ENCODE measurements at regions of chr14 and their contacts with region 1.

Region 1: DNA sequence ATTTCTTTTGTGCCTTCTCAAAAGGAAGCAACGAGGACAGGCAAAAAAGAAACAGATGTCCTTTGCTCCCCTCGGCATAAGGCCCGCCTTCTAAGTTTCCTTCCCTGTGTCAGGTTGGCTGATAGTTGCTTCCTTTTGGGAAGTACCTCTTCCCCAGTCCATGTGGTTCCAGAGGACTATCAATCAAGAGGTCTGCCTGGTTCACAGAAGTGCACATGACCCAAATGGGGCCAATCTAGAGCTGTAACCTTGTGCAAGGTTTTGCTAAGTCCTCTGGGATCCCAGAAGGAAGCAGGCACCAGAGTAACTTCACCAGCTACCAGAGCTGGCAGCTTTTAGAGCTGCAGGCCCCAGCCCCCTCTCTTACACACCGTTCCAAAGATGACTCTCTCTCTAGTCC is 42.6 kb downstream of the TMEM63C start:
- DNase-seq: no peak
- CTCF ChIP-seq: no peak

Region 2: GRCh38 chr14:77124345-77125280 is 99.6 kb before region 1 on chr14:
- CTCF ChIA-PET with region 1: no interaction called
- POLR2A ChIA-PET with region 1: no interaction called
- DNase-seq: peak; percentile 79
- CTCF ChIP-seq: peak; percentile 89

Region 3: DNA sequence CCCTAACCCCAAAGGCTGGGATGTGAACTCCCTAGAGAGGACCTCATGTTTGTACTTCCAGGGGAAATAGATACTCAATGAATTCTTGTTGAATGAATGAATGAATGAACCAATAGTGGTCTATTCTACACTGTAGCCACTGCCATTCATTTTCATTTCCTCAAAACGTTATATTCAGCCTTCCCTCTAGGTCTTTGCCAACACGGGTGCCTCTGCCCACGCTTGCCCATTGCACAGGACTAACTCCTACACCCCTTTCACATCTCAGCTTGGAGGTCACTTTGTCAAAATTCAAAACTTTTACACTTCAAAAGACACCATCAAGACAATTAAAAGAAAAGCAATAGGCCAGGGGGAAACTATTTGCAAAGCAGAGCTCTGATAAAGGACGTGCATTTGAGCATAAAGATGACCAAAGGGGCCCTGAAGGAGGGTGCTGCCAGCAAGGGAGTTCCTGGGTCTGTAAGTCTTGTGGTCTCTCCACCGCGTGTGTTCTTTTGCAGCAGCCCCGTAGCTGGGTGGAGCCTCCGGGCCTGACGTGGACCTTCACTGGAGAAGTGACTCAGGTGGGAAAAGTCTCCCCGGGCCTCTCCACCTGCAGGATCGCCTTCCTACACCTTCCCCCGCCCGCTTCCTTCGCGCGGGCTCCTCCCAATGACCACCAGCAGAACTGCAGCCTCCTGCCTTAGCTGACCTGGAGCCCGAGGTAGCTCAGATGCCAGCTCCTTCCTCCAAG is 11.1 kb before region 1 on chr14:
- CTCF ChIA-PET with region 1: interaction called, 17 read pairs
- POLR2A ChIA-PET with region 1: no interaction called
- DNase-seq: peak; percentile 75
- CTCF ChIP-seq: peak; percentile 87

Region 4: GRCh38 chr14:77241942-77242341 is 17.7 kb after region 1 on chr14:
- CTCF ChIA-PET with region 1: no interaction called
- POLR2A ChIA-PET with region 1: no interaction called
- DNase-seq: no peak
- CTCF ChIP-seq: no peak

Region 5: DNA sequence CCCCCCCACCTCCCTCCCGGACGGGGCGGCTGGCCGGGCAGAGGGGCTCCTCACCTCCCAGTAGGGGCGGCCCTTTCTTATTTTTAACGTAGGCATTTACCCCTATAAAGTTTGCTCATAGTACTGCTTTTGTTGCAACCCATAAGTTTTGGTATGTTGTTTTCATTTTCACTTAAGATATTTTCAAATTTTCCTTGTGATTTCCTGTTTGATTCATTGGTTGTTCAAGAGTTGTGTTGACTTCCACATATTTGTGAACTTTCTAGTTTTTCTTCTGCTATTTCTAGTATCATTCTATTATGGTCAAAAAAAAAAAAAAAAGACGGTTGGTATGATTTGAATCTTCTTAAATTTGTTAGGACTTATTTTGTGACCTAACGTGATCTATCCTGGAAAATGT is 192.6 kb after region 1 on chr14:
- CTCF ChIA-PET with region 1: no interaction called
- POLR2A ChIA-PET with region 1: no interaction called
- DNase-seq: no peak
- CTCF ChIP-seq: no peak

Measured in GM10248 (cell line).